Gastrocnemius medialis (tissue), 4 donors: ENCODE measurements at regions of chr5 and their contacts with region 1.

Region 1: GRCh38 chr5:177537389-177538361 is 16.7 kb downstream of the FAM193B start:
- DNase-seq: peak in 1 of 2 donors; percentile 64
- ATAC-seq: peak; percentile 50 to 57
- H3K4me3 ChIP-seq: no peak overlapping the region
- H3K27ac ChIP-seq: peak overlapping the region; percentile 76 to 95 (median 80)
- H3K4me1 ChIP-seq: peaks cover 72 to 79% of the 10 kb centered on the region in 2 donors
- H3K27me3 ChIP-seq: no peaks in the 10 kb centered on the region
- CTCF ChIP-seq: no peak
- POLR2A ChIP-seq: no peak

Region 2: DNA sequence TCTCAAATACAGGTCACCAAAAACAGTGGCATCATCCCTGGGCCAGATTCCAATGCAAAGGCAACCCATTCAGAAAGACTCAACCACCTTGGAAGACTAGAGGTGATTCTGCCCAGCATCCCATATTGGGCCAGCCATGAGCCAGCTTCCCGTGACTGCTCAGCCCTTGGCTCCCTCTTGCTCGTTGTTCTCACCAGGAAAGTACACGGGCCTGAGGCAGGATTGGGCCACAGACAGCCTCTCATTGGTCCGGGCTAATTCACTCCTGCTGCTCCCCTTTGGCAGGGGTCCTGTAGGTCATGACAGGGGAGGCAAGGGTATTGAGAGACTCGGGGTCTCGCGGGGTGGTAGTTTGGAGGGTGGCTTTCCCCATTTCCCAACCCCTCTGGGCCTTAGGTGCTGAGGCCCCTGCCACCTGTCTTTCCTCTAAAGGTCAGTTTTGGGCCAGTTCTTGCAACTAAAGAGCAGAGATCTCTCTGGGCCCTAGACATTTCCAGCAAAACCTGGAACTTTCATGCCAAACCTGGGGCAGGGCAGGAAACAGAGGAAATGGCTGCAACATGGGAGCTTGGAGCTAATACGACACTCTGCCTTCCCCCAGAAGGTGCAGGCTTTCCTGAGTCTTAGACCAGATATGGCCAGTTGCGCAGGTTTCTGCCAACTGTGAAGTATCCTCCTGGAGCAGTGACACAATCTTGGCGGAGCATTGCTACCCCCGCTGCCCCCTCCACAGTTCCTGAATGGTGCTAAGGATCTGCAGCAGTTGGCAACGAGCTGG is 473.0 kb before region 1 on chr5:
- in situ Hi-C with region 1: no loop called
- intact Hi-C with region 1: no loop called
- DNase-seq: no peak
- ATAC-seq: no peak
- H3K4me3 ChIP-seq: no peak overlapping the region
- H3K27ac ChIP-seq: no peak overlapping the region
- H3K4me1 ChIP-seq: no peaks in the 10 kb centered on the region
- H3K27me3 ChIP-seq: no peaks in the 10 kb centered on the region
- CTCF ChIP-seq: no peak
- POLR2A ChIP-seq: no peak

Region 3: DNA sequence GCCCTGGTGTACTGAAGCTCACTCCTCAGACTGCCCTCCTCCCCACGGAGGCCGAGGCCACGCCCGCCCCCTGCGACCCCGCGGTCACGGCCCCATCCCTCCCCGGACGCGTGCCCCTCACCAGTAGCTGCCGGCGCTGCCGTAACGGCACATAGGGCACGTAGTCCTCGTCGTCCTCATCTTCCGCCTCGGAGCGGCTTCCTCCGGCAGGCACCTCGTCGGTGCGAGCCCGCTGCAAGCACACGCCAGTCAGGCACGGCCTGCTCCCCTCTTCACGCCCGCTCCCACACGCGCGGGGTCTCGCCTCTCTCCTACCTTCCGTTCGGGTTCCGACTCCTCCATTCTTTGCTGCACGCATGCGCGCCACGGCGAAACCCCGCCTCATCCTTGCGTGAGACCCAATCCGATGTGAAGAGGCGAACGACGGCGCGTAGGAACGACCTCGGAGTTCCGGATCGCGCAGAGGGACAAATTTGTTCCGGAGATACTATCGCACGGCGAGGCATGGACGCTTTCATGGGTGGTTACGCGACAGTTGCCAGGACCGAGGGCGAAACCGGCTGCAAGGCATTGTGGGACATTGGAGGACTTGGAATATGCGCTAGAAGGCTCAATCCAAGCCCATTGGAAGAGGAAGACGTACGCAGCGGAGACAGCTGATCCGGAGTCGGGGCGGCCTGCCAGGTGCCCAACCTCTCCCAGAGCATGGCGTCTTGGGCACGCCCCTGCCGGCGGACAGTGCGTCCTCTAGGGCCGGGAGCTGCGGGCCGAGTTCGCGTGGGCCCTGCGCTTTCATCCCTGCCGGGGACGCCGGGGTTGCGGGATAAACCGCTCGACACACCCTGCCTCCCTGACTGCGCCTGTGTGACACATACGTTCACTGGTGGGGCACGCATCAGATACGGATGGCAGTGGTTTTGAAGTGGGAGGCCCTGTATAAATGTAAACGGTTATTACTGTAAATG is 20.8 kb before region 1 on chr5 and contains the start of gene DDX41:
- in situ Hi-C with region 1: no loop called
- intact Hi-C with region 1: loop called (anchors 2 kb)
- DNase-seq: peak; percentile 98 to 99
- ATAC-seq: peak; percentile 95 to 96
- H3K4me3 ChIP-seq: peak within 1 kb of the TSS; percentile 55 to 98 (median 90)
- H3K27ac ChIP-seq: peak within 1 kb of the TSS; percentile 88 to 94 (median 92)
- H3K4me1 ChIP-seq: peaks cover 15 to 28% of the 10 kb centered on the region in 2 donors
- H3K27me3 ChIP-seq: no peaks in the 10 kb centered on the region
- CTCF ChIP-seq: peak in 3 of 5 experiments; percentile 29 to 43 (median 37)
- POLR2A ChIP-seq: peak; percentile 4 to 25
- total RNA-seq, gene DDX41: 47.1 to 105 (median 62.3) TPM